CD8-positive, alpha-beta T cell (primary cell): ENCODE measurements at regions of chr5 and their contacts with region 1.

Region 1: GRCh38 chr5:96522635-96523355 is 89.7 kb upstream of the PCSK1 start:
- DNase-seq: no peak
- ATAC-seq: no peak
- H3K4me3 ChIP-seq: no peak overlapping the region
- H3K4me3 Mint-ChIP-seq: no peak overlapping the region
- H3K27ac ChIP-seq: no peak overlapping the region
- H3K27ac Mint-ChIP-seq: no peak overlapping the region
- H3K4me1 ChIP-seq: no peaks in the 10 kb centered on the region
- H3K4me1 Mint-ChIP-seq: no peaks in the 10 kb centered on the region
- H3K27me3 ChIP-seq: peaks cover 0 to 2% of the 10 kb centered on the region in 2 experiments
- H3K27me3 Mint-ChIP-seq: peaks cover 3% of the 10 kb centered on the region
- CTCF ChIP-seq: no peak

Region 2: DNA sequence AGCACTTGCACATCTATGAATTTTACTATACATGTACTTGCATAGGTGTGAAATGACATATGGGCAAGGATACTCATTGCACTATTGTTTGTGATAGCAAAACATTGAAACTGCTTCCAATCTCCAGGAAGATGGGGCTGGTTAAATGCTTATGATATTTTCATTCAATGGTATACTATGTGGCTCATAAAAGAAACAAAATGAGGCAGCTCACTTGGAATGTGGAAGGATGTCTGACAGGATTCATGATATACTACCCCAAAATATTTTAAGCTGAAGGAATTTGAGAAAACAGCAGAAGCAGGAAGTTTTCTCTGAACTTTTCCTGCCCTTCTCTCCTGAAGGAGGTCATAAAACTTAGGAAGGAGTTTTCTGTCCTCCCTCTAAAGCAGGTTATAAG is 39.8 kb after region 1 on chr5:
- CTCF ChIA-PET with region 1: no interaction called
- POLR2A ChIA-PET with region 1: no interaction called
- intact Hi-C with region 1: loop called in 1 of 2 experiments (anchors 5 kb)
- DNase-seq: no peak
- ATAC-seq: no peak
- H3K4me3 ChIP-seq: no peak overlapping the region
- H3K4me3 Mint-ChIP-seq: no peak overlapping the region
- H3K27ac ChIP-seq: no peak overlapping the region
- H3K27ac Mint-ChIP-seq: no peak overlapping the region
- H3K4me1 ChIP-seq: peaks cover 3% of the 10 kb centered on the region
- H3K4me1 Mint-ChIP-seq: peaks cover 12% of the 10 kb centered on the region
- H3K27me3 ChIP-seq: no peaks in the 10 kb centered on the region
- H3K27me3 Mint-ChIP-seq: no peaks in the 10 kb centered on the region
- CTCF ChIP-seq: no peak